Motor neuron (in vitro differentiated cells): ENCODE measurements at regions of chr12 and their contacts with region 1.

Region 1: DNA sequence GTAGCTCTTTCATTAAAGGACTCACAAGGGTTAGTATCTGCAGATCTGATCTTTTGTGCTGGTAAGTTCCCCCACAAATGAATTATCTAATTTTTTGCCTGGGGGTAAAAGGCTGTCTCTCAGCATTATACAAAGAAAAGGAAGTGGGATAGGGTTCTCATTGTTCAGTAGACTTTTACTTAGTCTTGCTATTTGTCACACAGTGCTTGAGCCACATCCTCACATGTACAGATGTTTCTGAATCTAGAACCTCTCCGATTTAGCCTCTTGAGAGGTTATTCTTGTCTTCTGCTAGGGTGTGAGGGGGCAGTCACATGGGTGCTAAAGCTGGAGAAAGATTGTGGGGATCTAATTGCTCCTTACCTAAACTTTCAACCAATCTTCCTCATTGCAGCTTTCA is 93.0 kb downstream of the SLC41A2 start:
- ATAC-seq: no peak
- H3K4me3 ChIP-seq: no peak overlapping the region
- H3K27ac ChIP-seq: no peak overlapping the region
- H3K4me1 ChIP-seq: no peaks in the 10 kb centered on the region

Region 2: GRCh38 chr12:104750061-104750460 is 115.0 kb before region 1 on chr12:
- in situ Hi-C with region 1: loop called in 1 of 9 experiments (anchors 25 kb)
- ATAC-seq: peak in 2 of 8 experiments; percentile 84 to 90
- H3K4me3 ChIP-seq: no peak overlapping the region
- H3K27ac ChIP-seq: no peak overlapping the region
- H3K4me1 ChIP-seq: peaks cover 15 to 23% of the 10 kb centered on the region in 2 donors

Region 3: GRCh38 chr12:104958009-104958945 is 93.2 kb after region 1 on chr12 and contains the start of gene SLC41A2:
- in situ Hi-C with region 1: loop called in 1 of 9 experiments (anchors 25 kb)
- ATAC-seq: peak; percentile 73 to 90 (median 82)
- H3K4me3 ChIP-seq: peak within 1 kb of the TSS; percentile 67 to 99 (median 86)
- H3K27ac ChIP-seq: peak within 1 kb of the TSS; percentile 84 to 86
- H3K4me1 ChIP-seq: peaks cover 10 to 25% of the 10 kb centered on the region in 2 donors
- total RNA-seq, gene SLC41A2: 6.4 to 45.1 (median 16.9) TPM